ENCODE measurements at regions of chr19 and their contacts with region 1.

Region 1: DNA sequence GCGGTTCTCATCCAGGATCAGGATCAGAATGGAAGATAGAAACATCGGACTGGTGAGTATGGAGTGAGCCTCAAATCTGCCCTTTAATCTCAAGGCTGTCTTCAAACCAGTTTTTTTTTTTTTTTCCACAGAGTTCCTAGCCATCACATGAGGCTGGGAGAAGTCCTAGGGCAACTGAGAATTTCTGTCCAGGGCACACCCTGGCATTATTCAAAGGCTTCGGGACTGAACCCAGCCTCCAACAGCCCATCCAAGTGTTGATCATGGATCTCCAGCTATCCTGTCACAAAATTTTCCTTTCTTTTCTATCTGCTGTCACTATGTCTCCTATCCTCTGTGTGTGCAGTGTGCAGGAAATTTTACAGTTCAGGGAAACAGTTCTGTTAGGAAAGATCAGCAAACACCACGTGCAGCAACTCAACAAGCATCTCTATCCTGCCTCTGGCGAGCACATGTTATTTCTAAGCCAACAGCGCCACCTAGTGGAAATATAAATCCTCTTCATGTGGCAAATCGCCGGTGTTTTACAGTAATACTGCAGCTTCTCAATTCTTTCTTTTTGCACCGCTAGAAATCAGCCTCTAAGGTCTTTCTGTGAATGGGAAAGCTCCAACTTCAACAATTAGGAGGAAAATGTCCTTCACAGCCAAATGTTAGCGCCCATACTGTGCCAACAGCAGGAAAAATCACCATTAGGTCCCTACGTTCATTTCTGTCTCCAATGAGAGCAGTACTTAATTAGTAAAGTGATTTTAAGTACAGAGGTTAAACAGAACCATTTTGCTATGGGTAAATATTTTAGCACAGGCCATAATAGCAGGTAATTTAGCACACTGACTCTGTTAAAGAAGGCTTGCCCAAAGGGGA is 21.4 kb upstream of the ZNF181 start:
- DNase-seq: peak; percentile 34 to 37
- H3K4me3 ChIP-seq: no peak overlapping the region
- H3K27ac ChIP-seq: no peak overlapping the region
- H3K4me1 ChIP-seq: no peaks in the 10 kb centered on the region
- H3K27me3 ChIP-seq: no peaks in the 10 kb centered on the region
- CTCF ChIP-seq: peak; percentile 61 to 88 (median 74)
- POLR2A ChIP-seq: no peak

Region 2: DNA sequence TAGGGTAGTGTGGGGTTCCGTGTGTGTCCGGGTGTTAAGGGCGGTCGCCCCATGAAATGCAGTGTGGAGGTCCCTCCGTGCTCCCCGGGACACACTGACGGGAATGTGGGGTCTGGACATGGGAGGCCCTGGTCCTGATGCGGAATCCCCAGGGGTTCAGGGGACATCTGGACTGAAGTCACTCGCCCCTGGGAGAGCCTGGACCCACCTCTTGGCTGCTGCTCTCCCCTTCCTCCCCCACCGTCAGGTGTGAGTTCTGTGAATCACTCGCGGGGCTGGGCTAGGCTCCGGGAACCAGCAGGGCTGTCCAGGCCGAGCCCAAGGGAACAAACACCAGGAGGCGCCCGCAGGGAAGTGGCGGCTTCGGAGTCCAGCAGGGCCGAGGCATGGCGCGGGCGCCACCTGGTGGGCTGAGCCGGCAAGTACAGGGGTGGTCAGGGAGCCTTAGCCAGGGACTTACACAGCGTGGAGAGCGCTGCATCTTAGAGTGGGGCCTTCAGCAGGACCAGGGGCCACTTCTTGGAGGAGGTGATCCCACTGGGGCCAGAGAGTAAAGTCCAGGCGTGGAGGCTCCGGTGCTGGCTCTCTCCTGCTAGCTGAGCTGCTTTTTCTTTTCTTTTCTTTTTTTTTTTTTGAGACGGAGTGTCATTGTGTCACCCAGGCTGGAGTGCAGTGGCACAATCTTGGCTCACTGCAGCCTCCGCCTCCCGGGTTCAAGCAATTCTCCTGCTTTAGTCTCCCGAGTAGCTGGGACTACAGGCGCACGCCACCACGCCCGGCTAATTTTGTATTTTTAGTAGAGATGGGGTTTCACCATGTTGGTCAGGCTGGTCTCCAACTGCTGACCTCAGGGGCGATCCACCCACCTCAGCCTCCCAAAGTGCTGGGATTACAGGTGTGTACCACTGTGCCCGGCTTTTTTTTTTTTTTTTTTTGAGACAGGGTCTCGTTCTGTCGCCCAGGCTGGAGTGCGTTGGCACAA is 211.0 kb before region 1 on chr19:
- intact Hi-C with region 1: loop called (anchors 10 kb)
- DNase-seq: peak; percentile 85 to 91
- H3K4me3 ChIP-seq: no peak overlapping the region
- H3K27ac ChIP-seq: no peak overlapping the region
- H3K4me1 ChIP-seq: peaks cover 0 to 11% of the 10 kb centered on the region in 2 donors
- H3K27me3 ChIP-seq: no peaks in the 10 kb centered on the region
- CTCF ChIP-seq: peak; percentile 91 to 99 (median 97)
- POLR2A ChIP-seq: no peak

Region 3: GRCh38 chr19:34639491-34640085 is 73.0 kb before region 1 on chr19:
- intact Hi-C with region 1: loop called (anchors 5 kb)
- DNase-seq: peak; percentile 34 to 64
- H3K4me3 ChIP-seq: no peak overlapping the region
- H3K27ac ChIP-seq: no peak overlapping the region
- H3K4me1 ChIP-seq: no peaks in the 10 kb centered on the region
- H3K27me3 ChIP-seq: no peaks in the 10 kb centered on the region
- CTCF ChIP-seq: peak; percentile 22 to 77 (median 70)
- POLR2A ChIP-seq: no peak